Activated B cell treated with CpG ODN at 0.5 μM for 24 hours (primary cell): ENCODE measurements at regions of chr14 and their contacts with region 1.

Region 1: DNA sequence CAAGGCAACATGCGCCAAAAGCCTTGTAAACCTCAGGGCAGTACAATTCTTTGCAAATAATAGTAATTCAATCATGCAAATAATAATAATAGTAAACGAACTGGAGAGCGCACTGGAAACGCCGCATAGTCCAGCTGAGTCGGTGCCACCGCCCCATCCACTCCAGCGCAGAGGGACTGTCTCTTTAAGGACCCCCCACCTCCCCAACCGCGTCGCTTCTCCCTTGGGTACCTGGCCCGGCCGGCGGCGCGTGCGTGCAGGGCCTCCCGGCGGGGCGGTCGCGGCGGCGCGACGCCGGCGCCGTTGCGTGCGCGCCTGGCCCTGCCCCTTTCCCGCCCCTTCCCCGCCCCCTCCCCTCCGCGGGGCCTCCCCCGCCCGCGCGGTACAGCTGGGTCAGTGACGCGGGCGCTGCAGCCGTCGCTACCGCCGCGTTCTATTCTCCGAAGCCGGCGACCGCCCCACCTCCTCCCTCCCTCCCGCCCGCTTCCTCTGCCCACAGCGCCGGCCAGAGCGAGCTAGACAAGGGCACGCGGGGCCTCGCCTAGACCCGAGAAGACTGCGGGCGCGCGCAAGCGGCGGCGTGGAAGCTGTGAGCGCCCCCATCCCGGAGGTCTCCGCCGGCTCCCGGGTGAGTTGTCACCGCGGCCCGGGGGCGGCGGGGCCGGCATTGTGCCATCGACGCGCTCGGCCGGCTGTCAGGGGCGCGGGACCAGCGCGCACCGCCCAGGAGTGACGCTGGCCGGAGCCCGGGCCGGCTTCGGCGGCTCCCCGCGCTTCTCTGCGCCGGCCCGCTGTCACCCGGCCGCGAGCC is at the start of gene SUSD6:
- DNase-seq: peak; percentile 87
- ATAC-seq: peak; percentile 68
- H3K4me3 Mint-ChIP-seq: peak within 1 kb of the TSS; percentile 97
- H3K27ac Mint-ChIP-seq: peak within 1 kb of the TSS; percentile 99
- H3K4me1 Mint-ChIP-seq: peaks cover 54% of the 10 kb centered on the region
- H3K27me3 Mint-ChIP-seq: no peaks in the 10 kb centered on the region
- CTCF ChIP-seq: no peak
- total RNA-seq, gene SUSD6: 63.5 and 67.1 TPM in 2 replicates

Region 2: DNA sequence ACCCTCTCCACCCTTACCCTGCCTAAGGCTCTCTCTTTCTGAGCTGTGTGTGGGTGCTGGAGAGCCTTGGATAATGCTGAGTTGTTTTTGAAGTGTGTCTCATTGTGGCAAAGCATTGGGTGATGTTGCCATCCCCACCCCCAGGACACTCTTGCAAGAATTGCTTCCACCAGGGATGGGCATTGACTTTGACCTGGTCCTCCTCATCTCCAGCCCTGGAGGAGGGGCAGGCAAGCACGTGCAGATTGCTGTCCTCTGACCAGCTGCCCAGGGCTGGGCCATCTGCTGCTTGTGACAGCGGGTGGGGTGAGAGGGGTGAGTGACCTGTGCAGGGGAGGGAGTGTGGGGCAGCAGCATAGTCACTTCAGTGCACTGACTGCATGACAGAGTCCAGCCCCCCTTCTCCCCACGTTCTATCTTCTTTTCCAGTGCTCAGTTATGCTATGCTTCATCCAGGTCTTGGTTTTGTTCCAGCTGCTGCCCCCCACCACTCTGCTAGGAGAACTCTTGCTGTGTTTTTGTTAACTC is 26.2 kb after region 1 on chr14:
- CTCF ChIA-PET with region 1: interaction called, 4 read pairs
- POLR2A ChIA-PET with region 1: interaction called, 17 read pairs
- intact Hi-C with region 1: loop called (anchors 1 kb)
- DNase-seq: no peak
- ATAC-seq: no peak
- H3K4me3 Mint-ChIP-seq: peak overlapping the region; percentile 72
- H3K27ac Mint-ChIP-seq: peak overlapping the region; percentile 92
- H3K4me1 Mint-ChIP-seq: peaks cover 95% of the 10 kb centered on the region
- H3K27me3 Mint-ChIP-seq: no peaks in the 10 kb centered on the region
- CTCF ChIP-seq: no peak

Region 3: GRCh38 chr14:69666690-69667239 is 55.4 kb after region 1 on chr14:
- CTCF ChIA-PET with region 1: interaction called, 4 read pairs
- POLR2A ChIA-PET with region 1: interaction called, 25 read pairs
- intact Hi-C with region 1: no loop called
- DNase-seq: no peak
- ATAC-seq: no peak
- H3K4me3 Mint-ChIP-seq: peak overlapping the region; percentile 62
- H3K27ac Mint-ChIP-seq: peak overlapping the region; percentile 84
- H3K4me1 Mint-ChIP-seq: peaks cover 98% of the 10 kb centered on the region
- H3K27me3 Mint-ChIP-seq: no peaks in the 10 kb centered on the region
- CTCF ChIP-seq: no peak

Region 4: DNA sequence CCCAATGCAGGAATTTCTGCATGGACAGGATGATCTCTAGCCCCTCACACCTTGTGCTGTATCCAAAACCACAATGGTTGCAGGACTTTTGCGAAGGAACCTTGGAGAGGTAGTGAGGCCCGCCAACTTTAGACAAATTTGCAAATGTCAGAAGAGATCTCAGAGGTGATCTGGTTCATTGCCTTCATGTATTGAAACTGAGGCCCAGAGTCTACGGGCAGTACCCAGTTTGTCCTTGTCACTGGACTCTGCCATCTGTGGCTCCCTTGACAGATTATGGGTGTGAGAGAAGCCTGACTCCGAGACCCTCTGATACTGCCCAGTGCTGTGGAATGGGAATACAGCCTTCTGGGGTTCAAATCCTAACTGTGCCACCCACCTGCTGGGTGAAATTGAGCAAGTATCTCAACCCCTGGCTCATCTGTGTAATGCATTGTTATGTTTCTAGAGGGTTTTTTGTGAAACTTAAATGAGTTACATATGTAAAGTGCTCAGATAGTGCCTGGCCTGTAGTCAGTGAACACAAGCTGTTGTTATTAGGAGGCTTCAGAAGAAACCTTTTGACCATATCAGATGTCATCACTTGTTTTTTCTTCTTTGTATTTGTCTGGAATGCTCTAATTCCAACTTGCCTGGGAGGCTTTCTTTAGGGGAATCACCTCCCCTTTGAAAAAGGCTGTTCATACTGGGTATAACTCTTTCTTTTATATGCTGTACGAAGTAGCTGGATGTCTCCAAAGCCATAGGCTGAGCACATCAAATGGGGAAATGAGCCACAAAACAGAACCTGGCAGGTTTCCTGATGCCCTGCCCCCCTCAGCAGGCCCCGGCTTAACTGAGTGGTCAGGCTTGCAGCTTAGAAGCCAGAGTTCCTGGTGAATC is 84.2 kb after region 1 on chr14:
- CTCF ChIA-PET with region 1: no interaction called
- POLR2A ChIA-PET with region 1: interaction called, 9 read pairs
- intact Hi-C with region 1: loop called (anchors 2 kb)
- DNase-seq: no peak
- ATAC-seq: peak; percentile 45
- H3K4me3 Mint-ChIP-seq: peak overlapping the region; percentile 30
- H3K27ac Mint-ChIP-seq: peak overlapping the region; percentile 85
- H3K4me1 Mint-ChIP-seq: peaks cover 90% of the 10 kb centered on the region
- H3K27me3 Mint-ChIP-seq: no peaks in the 10 kb centered on the region
- CTCF ChIP-seq: no peak

Region 5: GRCh38 chr14:69726761-69727511 is 115.5 kb after region 1 on chr14:
- CTCF ChIA-PET with region 1: interaction called, 48 read pairs
- POLR2A ChIA-PET with region 1: interaction called, 12 read pairs
- intact Hi-C with region 1: no loop called
- DNase-seq: peak; percentile 86
- ATAC-seq: peak; percentile 93
- H3K4me3 Mint-ChIP-seq: peak overlapping the region; percentile 79
- H3K27ac Mint-ChIP-seq: peak overlapping the region; percentile 69
- H3K4me1 Mint-ChIP-seq: peaks cover 13% of the 10 kb centered on the region
- H3K27me3 Mint-ChIP-seq: peaks cover 4% of the 10 kb centered on the region
- CTCF ChIP-seq: peak; percentile 92

Region 6: GRCh38 chr14:69901113-69901951 is 289.9 kb after region 1 on chr14:
- CTCF ChIA-PET with region 1: no interaction called
- POLR2A ChIA-PET with region 1: no interaction called
- intact Hi-C with region 1: no loop called
- DNase-seq: no peak
- ATAC-seq: no peak
- H3K4me3 Mint-ChIP-seq: no peak overlapping the region
- H3K27ac Mint-ChIP-seq: no peak overlapping the region
- H3K4me1 Mint-ChIP-seq: no peaks in the 10 kb centered on the region
- H3K27me3 Mint-ChIP-seq: peaks cover 2% of the 10 kb centered on the region
- CTCF ChIP-seq: no peak

Region 7: DNA sequence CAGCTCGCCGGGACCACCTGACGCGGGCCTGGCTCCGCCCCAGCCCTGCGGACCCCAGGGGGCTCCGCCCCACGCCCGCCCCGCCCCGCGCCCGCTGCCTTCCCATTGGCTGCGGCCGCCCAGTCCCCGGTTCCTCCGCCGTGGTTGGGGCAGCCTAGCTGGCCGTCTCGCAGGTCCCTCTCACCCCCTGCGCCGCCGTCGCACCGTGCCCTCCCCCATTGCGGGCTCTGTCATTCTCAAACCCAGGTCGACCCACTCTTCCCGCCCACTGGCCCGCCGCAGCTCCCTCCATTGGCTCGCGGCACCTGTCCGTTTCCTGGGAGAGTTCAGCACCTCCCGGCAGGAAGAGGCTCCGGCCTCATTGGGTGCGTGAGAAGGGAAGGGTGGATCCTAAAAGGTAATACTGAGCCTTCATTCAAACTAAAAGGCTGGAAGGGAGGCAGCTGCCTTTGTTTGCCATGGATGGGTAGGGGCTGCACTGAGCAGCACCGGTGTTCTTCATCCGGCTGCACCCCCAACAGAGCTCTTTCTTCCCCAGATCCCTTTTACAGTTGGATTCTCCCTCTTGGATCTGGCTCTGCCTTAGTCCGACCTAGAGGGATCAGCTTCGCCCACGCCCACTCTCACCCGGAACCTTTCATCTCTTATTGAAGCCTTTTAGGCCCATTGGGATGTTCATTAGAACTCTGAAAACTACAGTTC is 1198.3 kb after region 1 on chr14:
- CTCF ChIA-PET with region 1: no interaction called
- POLR2A ChIA-PET with region 1: no interaction called
- intact Hi-C with region 1: loop called (anchors 10 kb)
- DNase-seq: peak; percentile 85
- ATAC-seq: peak; percentile 87
- H3K4me3 Mint-ChIP-seq: no peak overlapping the region
- H3K27ac Mint-ChIP-seq: peak overlapping the region; percentile 80
- H3K4me1 Mint-ChIP-seq: peaks cover 24% of the 10 kb centered on the region
- H3K27me3 Mint-ChIP-seq: no peaks in the 10 kb centered on the region
- CTCF ChIP-seq: no peak